ENCODE measurements at regions of chr1 and their contacts with region 1.

Region 1: GRCh38 chr1:151327223-151327902 is at the start of gene PI4KB:
- DNase-seq: peak; percentile 91 to 94
- ATAC-seq: peak; percentile 98
- H3K4me3 ChIP-seq: peak within 1 kb of the TSS; percentile 85 to 93
- H3K27ac ChIP-seq: peak within 1 kb of the TSS; percentile 59 to 85
- H3K4me1 ChIP-seq: peaks cover 0 to 2% of the 10 kb centered on the region in 2 donors
- H3K27me3 ChIP-seq: no peaks in the 10 kb centered on the region
- total RNA-seq, gene PI4KB: 49.0 to 60.9 TPM

Region 2: DNA sequence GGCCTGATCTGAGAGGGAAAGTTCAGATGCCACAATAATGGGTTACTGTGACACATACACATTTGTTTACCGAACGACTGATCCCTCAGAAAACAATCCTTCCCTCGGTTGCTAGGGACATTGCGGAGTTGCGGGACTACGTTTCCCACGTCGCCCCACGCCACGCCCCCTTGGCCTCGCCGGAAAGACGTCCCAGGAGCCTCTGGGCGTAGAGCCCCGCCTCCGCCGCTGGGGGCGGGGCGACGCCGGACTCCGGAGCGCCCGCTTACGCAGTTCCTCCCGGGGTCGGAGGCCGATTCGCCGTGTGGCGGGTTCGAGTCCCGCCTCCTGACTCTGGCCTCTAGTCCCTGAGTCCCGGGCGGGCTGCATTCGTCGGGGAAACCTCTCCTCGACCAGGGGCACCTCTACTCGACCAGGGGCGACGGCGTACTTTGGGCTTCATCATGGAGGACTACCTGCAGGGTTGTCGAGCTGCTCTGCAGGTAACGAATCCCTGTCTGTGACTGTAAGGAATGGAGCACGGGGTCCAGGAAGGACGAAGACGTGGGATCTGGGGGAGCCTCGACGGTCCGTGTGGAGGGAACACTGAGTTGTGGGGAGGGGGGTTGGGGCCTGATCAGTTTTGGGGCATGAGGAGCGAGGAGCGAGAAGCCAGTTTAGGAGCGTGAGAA is 319.0 kb before region 1 on chr1 and contains the start of gene PRUNE1:
- intact Hi-C with region 1: no loop called
- DNase-seq: peak; percentile 99 to 100
- ATAC-seq: peak; percentile 97
- H3K4me3 ChIP-seq: peak within 1 kb of the TSS; percentile 27 to 42
- H3K27ac ChIP-seq: peak within 1 kb of the TSS in 1 of 2 donors; percentile 90
- H3K4me1 ChIP-seq: peaks cover 0 to 3% of the 10 kb centered on the region in 2 donors
- H3K27me3 ChIP-seq: no peaks in the 10 kb centered on the region
- total RNA-seq, gene PRUNE1: 14.8 TPM

Region 3: GRCh38 chr1:151281969-151282882 is 45.1 kb before region 1 on chr1 and contains the start of gene ZNF687:
- intact Hi-C with region 1: loop called in 1 of 2 experiments (anchors 5 kb)
- DNase-seq: peak; percentile 100
- ATAC-seq: peak; percentile 96
- H3K4me3 ChIP-seq: peak within 1 kb of the TSS; percentile 43 to 66
- H3K27ac ChIP-seq: peak within 1 kb of the TSS; percentile 8 to 96
- H3K4me1 ChIP-seq: no peaks in the 10 kb centered on the region
- H3K27me3 ChIP-seq: no peaks in the 10 kb centered on the region
- total RNA-seq, gene ZNF687: 18.4 to 24.0 TPM

Region 4: GRCh38 chr1:151311589-151312331 is 15.6 kb before region 1 on chr1:
- intact Hi-C with region 1: loop called in 1 of 2 experiments (anchors 1 kb)
- DNase-seq: peak; percentile 85 to 86
- ATAC-seq: peak; percentile 92
- H3K4me3 ChIP-seq: no peak overlapping the region
- H3K27ac ChIP-seq: peak overlapping the region in 1 of 2 donors; percentile 64
- H3K4me1 ChIP-seq: peaks cover 0 to 2% of the 10 kb centered on the region in 2 donors
- H3K27me3 ChIP-seq: no peaks in the 10 kb centered on the region

Measured in aorta (tissue), 5 donors.